ENCODE measurements at regions of chr14 and their contacts with region 1.

Region 1: GRCh38 chr14:77314043-77314442 is 6.6 kb downstream of the POMT2 start:
- DNase-seq: peak; percentile 97
- H3K4me3 ChIP-seq: no peak overlapping the region
- H3K27me3 ChIP-seq: no peaks in the 10 kb centered on the region
- CTCF ChIP-seq: no peak

Region 2: DNA sequence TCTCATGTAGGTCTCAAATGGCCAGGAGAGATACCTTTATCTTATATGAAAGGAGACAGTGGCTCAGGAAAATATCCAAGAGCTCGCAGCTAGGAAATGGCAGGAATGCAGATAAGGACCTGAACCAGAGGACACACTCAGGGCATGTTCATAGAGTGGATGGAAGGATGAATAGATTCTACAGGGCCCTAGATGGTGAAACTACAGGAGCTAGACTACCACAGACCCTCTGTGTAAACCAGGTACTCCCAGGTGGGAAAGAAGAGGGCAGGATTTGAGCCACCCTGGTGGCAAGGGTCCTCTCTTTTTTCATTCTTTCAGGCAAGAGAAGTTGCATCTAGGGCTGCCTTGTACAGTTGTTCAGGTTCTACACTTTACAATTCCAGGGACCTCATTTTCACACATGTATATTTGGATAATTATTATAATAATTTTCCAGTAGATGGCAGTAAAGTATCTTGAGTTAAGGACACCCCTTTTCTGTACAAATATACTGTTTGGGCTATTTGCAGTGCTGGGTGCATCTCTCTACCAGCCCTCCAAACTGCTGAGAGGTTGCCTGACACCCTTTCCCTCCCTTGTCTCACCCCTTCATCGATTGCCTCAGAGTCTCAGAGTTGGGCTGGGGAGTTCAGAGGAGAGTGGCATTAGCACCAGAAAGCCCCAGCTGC is 162.0 kb before region 1 on chr14:
- CTCF ChIA-PET with region 1: interaction called, 59 read pairs
- POLR2A ChIA-PET with region 1: no interaction called
- DNase-seq: no peak
- H3K4me3 ChIP-seq: no peak overlapping the region
- H3K27me3 ChIP-seq: peaks cover 15% of the 10 kb centered on the region
- CTCF ChIP-seq: peak; percentile 11; the same call in 1 of the 2 replicates

Region 3: GRCh38 chr14:77284466-77284865 is 29.6 kb before region 1 on chr14:
- CTCF ChIA-PET with region 1: interaction called, 13 read pairs
- POLR2A ChIA-PET with region 1: no interaction called
- DNase-seq: no peak
- H3K4me3 ChIP-seq: no peak overlapping the region
- H3K27me3 ChIP-seq: no peaks in the 10 kb centered on the region
- CTCF ChIP-seq: no peak

Region 4: DNA sequence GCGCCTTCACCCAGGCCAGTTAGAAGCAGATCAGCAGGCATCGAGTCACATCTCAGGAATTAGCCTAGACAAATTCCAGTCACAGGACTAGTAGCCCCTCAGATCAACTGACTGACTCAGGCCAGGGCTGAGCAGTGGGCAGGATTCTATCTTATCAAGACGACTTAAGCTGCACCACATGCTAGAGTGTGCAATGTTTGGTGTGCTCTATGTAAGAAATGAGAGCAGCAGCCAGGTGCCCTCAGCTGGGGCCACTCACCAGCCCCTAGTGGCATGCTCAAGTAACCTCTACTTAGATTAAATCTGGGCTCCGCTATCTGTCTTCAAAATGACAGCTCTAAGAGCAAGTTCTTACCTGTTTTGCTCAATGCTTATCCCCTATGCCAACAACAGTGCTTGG is 23.3 kb before region 1 on chr14:
- CTCF ChIA-PET with region 1: interaction called, 426 read pairs
- POLR2A ChIA-PET with region 1: no interaction called
- DNase-seq: no peak
- H3K4me3 ChIP-seq: no peak overlapping the region
- H3K27me3 ChIP-seq: no peaks in the 10 kb centered on the region
- CTCF ChIP-seq: no peak

Region 5: DNA sequence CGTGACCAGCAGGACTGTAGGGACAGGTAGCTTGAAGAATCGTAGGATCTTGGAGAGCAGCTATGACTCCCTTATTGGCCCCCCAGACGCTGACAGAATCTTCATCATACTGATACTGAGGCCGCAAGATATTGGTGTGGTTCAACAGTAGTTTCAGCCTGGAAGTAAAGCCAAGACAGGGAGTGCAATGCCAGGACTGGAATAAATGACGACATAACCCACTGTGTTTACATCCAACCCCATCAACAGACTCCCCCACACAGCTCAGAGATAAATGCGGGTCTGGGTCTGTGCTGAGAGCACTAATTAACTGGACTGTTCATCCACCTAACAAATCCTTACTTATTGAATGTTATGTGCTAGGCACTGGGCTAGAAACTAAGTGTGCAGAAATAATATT is 92.7 kb after region 1 on chr14:
- CTCF ChIA-PET with region 1: no interaction called
- POLR2A ChIA-PET with region 1: no interaction called
- DNase-seq: no peak
- H3K4me3 ChIP-seq: no peak overlapping the region
- H3K27me3 ChIP-seq: no peaks in the 10 kb centered on the region
- CTCF ChIP-seq: no peak

Region 6: GRCh38 chr14:77416836-77417235 is 102.8 kb after region 1 on chr14:
- CTCF ChIA-PET with region 1: no interaction called
- POLR2A ChIA-PET with region 1: interaction called, 10 read pairs
- DNase-seq: no peak
- H3K4me3 ChIP-seq: no peak overlapping the region
- H3K27me3 ChIP-seq: no peaks in the 10 kb centered on the region
- CTCF ChIP-seq: no peak